ENCODE measurements at regions of chr2 and their contacts with region 1.

Region 1: GRCh38 chr2:234125451-234126145 is 75.1 kb downstream of the SPP2 start:
- DNase-seq: no peak
- ATAC-seq: no peak
- H3K4me3 ChIP-seq: no peak overlapping the region
- H3K4me3 Mint-ChIP-seq: no peak overlapping the region
- H3K27ac ChIP-seq: no peak overlapping the region
- H3K27ac Mint-ChIP-seq: no peak overlapping the region
- H3K4me1 ChIP-seq: peaks cover 0 to 4% of the 10 kb centered on the region in 2 experiments
- H3K4me1 Mint-ChIP-seq: peaks cover 4 to 13% (median 6%) of the 10 kb centered on the region in 3 donors
- H3K27me3 ChIP-seq: peaks cover 0 to 2% of the 10 kb centered on the region in 2 experiments
- H3K27me3 Mint-ChIP-seq: peaks cover 0 to 2% of the 10 kb centered on the region in 2 donors

Region 2: DNA sequence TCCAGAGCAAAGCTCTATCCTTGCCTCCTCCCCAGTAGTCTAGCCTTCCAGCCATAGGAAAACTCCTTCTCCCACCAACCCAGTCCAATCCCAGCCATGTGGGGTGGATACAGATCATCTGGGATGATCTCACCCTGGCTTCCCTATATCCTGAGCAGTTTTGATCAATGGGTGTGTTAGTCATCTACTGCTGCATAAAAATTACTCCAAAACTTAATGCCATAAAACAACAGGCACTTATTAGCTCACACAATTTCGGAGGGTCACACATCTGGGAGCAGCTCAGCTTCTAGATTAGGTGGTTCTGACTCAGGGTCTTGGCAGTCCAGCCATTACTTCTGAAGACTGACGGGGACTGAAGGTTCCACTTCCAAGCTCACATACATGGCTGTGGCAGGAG is 115.3 kb after region 1 on chr2:
- CTCF ChIA-PET with region 1: interaction called in 1 of 2 experiments, 12 read pairs
- POLR2A ChIA-PET with region 1: no interaction called
- DNase-seq: no peak
- ATAC-seq: no peak
- H3K4me3 ChIP-seq: no peak overlapping the region
- H3K4me3 Mint-ChIP-seq: no peak overlapping the region
- H3K27ac ChIP-seq: no peak overlapping the region
- H3K27ac Mint-ChIP-seq: no peak overlapping the region
- H3K4me1 ChIP-seq: peaks cover 0 to 3% of the 10 kb centered on the region in 2 experiments
- H3K4me1 Mint-ChIP-seq: peaks cover 11 to 18% (median 17%) of the 10 kb centered on the region in 3 donors
- H3K27me3 ChIP-seq: no peaks in the 10 kb centered on the region
- H3K27me3 Mint-ChIP-seq: no peaks in the 10 kb centered on the region